T-cell (primary cell): ENCODE measurements at regions of chr4 and their contacts with region 1.

Region 1: DNA sequence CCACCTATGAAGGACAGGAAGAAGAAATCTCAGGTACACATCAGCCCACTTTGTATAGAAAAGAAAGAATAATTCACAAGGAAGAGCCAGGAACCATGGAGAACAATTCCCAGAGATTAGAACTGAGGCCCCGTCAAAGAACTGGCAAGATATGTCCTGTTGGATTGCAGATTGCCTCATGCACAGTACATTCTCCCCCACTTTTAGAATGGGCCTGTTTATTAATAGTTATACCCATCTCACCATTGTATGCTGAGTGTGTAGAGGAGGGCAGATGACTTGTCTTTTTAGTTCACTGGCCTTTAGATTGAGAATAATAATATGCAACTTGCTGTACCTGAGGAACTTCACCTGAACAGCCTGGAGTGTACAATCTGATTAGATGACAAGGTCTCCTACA is 315.6 kb upstream of the HAND2 start:
- DNase-seq: no peak
- ATAC-seq: no peak
- H3K4me3 ChIP-seq: no peak overlapping the region
- H3K4me3 Mint-ChIP-seq: no peak overlapping the region
- H3K27ac ChIP-seq: no peak overlapping the region
- H3K27ac Mint-ChIP-seq: no peak overlapping the region
- H3K4me1 ChIP-seq: no peaks in the 10 kb centered on the region
- H3K4me1 Mint-ChIP-seq: no peaks in the 10 kb centered on the region
- H3K27me3 ChIP-seq: no peaks in the 10 kb centered on the region
- H3K27me3 Mint-ChIP-seq: peaks cover 0 to 3% of the 10 kb centered on the region in 2 donors

Region 2: DNA sequence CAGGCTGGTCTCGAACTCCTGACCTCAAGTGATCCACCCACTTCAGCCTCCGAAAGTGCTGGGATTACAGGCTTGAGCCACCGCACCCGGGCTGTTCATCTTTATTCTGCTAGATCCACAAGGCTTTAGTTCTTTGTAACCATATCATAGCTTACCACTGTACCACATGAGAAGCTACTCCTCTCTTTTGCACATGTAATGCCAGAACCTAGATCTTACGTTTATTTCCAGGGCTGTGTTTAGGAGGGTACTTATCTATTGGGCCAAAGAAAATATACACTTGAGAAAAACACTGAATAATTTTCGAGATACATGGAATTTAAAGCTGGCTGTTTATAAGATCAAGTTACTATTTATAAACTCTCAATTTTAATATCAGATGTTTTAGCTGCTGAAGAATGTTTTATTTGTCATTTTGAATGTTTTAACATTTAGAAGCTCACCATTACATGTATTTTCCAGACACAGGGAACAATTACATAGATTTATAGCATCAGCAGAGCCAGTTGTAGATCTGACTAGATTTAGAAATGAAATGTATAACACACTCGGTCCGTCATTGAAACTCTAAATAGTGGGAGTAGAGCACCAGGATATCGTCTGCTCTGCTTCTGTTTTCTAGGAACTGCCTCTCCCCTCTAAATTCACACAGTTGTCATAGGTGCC is 160.3 kb before region 1 on chr4:
- CTCF ChIA-PET with region 1: no interaction called
- POLR2A ChIA-PET with region 1: no interaction called
- DNase-seq: no peak
- ATAC-seq: no peak
- H3K4me3 ChIP-seq: no peak overlapping the region
- H3K4me3 Mint-ChIP-seq: no peak overlapping the region
- H3K27ac ChIP-seq: no peak overlapping the region
- H3K27ac Mint-ChIP-seq: no peak overlapping the region
- H3K4me1 ChIP-seq: no peaks in the 10 kb centered on the region
- H3K4me1 Mint-ChIP-seq: no peaks in the 10 kb centered on the region
- H3K27me3 ChIP-seq: peaks cover 0 to under 1% of the 10 kb centered on the region in 2 experiments
- H3K27me3 Mint-ChIP-seq: peaks cover 0 to 13% of the 10 kb centered on the region in 2 donors

Region 3: GRCh38 chr4:173797296-173797695 is 48.3 kb before region 1 on chr4:
- CTCF ChIA-PET with region 1: no interaction called
- POLR2A ChIA-PET with region 1: interaction called in 1 of 2 experiments, 17 read pairs
- DNase-seq: no peak
- ATAC-seq: no peak
- H3K4me3 ChIP-seq: no peak overlapping the region
- H3K4me3 Mint-ChIP-seq: no peak overlapping the region
- H3K27ac ChIP-seq: no peak overlapping the region
- H3K27ac Mint-ChIP-seq: no peak overlapping the region
- H3K4me1 ChIP-seq: no peaks in the 10 kb centered on the region
- H3K4me1 Mint-ChIP-seq: no peaks in the 10 kb centered on the region
- H3K27me3 ChIP-seq: no peaks in the 10 kb centered on the region
- H3K27me3 Mint-ChIP-seq: no peaks in the 10 kb centered on the region

Region 4: GRCh38 chr4:173899813-173900212 is 54.2 kb after region 1 on chr4:
- CTCF ChIA-PET with region 1: no interaction called
- POLR2A ChIA-PET with region 1: no interaction called
- DNase-seq: no peak
- ATAC-seq: no peak
- H3K4me3 ChIP-seq: no peak overlapping the region
- H3K4me3 Mint-ChIP-seq: no peak overlapping the region
- H3K27ac ChIP-seq: no peak overlapping the region
- H3K27ac Mint-ChIP-seq: no peak overlapping the region
- H3K4me1 ChIP-seq: no peaks in the 10 kb centered on the region
- H3K4me1 Mint-ChIP-seq: no peaks in the 10 kb centered on the region
- H3K27me3 ChIP-seq: no peaks in the 10 kb centered on the region
- H3K27me3 Mint-ChIP-seq: no peaks in the 10 kb centered on the region